ENCODE measurements at regions of chr7 and their contacts with region 1.

Region 1: GRCh38 chr7:151315038-151315655 is 26.5 kb upstream of the NUB1 start:
- DNase-seq: peak; percentile 31
- ATAC-seq: peak; percentile 96
- H3K4me3 ChIP-seq: no peak overlapping the region
- H3K27ac ChIP-seq: no peak overlapping the region
- H3K4me1 ChIP-seq: no peaks in the 10 kb centered on the region
- H3K27me3 ChIP-seq: no peaks in the 10 kb centered on the region
- CTCF ChIP-seq: peak; percentile 73 to 87 (median 74)
- EP300 ChIP-seq: no peak
- POLR2A ChIP-seq: no peak
- RAD21 ChIP-seq: peak; percentile 93

Region 2: GRCh38 chr7:151244196-151244840 is 70.8 kb before region 1 on chr7:
- CTCF ChIA-PET with region 1: interaction called, 14 read pairs
- POLR2A ChIA-PET with region 1: no interaction called
- RAD21 ChIA-PET with region 1: interaction called, 4 read pairs
- SMC1A ChIA-PET with region 1: interaction called, 5 read pairs
- in situ Hi-C with region 1: no loop called
- intact Hi-C with region 1: no loop called
- DNase-seq: peak; percentile 15
- ATAC-seq: peak; percentile 69
- H3K4me3 ChIP-seq: no peak overlapping the region; the same call in 1 of the 2 replicates
- H3K27ac ChIP-seq: no peak overlapping the region
- H3K4me1 ChIP-seq: peaks cover 16% of the 10 kb centered on the region
- H3K27me3 ChIP-seq: peaks cover 15 to 24% of the 10 kb centered on the region in 2 experiments
- CTCF ChIP-seq: peak; percentile 65 to 92 (median 90)
- EP300 ChIP-seq: no peak
- POLR2A ChIP-seq: no peak
- RAD21 ChIP-seq: peak; percentile 68

Region 3: GRCh38 chr7:151327659-151328058 is 12.5 kb after region 1 on chr7:
- CTCF ChIA-PET with region 1: interaction called, 34 read pairs
- POLR2A ChIA-PET with region 1: interaction called, 5 read pairs
- RAD21 ChIA-PET with region 1: interaction called, 3 read pairs
- SMC1A ChIA-PET with region 1: interaction called, 18 read pairs
- in situ Hi-C with region 1: no loop called
- intact Hi-C with region 1: no loop called
- DNase-seq: no peak
- ATAC-seq: no peak
- H3K4me3 ChIP-seq: no peak overlapping the region
- H3K27ac ChIP-seq: no peak overlapping the region
- H3K4me1 ChIP-seq: no peaks in the 10 kb centered on the region
- H3K27me3 ChIP-seq: no peaks in the 10 kb centered on the region
- CTCF ChIP-seq: no peak
- EP300 ChIP-seq: no peak
- POLR2A ChIP-seq: no peak
- RAD21 ChIP-seq: no peak

Region 4: DNA sequence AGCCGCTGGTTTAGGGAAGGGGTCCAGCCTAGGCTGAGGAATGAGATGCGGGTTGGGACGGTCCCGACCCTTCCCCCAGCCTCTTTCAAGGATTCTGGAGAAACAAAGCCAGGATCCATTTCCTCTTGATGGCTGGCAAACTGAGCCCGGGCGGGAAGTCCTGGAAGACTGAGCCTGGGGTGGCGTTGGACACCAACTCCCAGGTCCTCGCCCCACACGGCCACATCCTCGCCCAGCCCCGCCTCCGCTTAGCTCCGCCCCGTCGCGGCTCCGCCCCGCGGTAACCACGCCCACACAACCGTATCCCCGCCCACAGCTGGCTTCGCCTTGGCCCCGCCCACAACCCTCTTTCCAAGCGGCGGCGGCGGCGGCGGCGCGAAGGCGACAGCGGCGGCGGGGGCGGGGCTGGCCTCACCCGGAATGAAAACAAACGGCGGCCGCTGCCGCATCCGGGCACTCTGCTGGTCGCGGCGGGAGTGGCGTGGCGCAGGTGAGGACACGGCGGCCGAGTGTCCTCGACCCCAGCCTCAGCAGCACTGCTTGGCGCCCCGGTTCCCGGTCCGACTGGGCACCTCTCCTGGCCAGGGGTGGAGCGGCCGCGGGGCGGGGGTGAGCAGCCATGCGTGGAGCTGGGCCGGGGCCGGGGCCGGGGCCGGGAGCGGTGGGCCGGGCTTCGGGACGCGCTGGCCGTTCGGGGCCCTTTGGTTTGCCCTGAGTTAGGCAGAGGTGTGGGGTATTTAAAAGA is 26.4 kb after region 1 on chr7 and contains the start of gene NUB1:
- CTCF ChIA-PET with region 1: interaction called, 69 read pairs
- POLR2A ChIA-PET with region 1: interaction called, 8 read pairs
- RAD21 ChIA-PET with region 1: interaction called, 10 read pairs
- SMC1A ChIA-PET with region 1: interaction called, 27 read pairs
- in situ Hi-C with region 1: no loop called
- intact Hi-C with region 1: no loop called
- DNase-seq: no peak
- ATAC-seq: peak; percentile 80
- H3K4me3 ChIP-seq: peak within 1 kb of the TSS; percentile 65
- H3K27ac ChIP-seq: peak within 1 kb of the TSS; percentile 81
- H3K4me1 ChIP-seq: peaks cover 25% of the 10 kb centered on the region
- H3K27me3 ChIP-seq: no peaks in the 10 kb centered on the region
- CTCF ChIP-seq: no peak
- EP300 ChIP-seq: no peak
- POLR2A ChIP-seq: peak; percentile 95
- RAD21 ChIP-seq: no peak
- polyA plus RNA-seq, gene NUB1: 24.1 to 28.8 TPM

Region 5: GRCh38 chr7:151361193-151361959 is 46.2 kb after region 1 on chr7:
- CTCF ChIA-PET with region 1: interaction called, 252 read pairs
- POLR2A ChIA-PET with region 1: no interaction called
- RAD21 ChIA-PET with region 1: no interaction called
- SMC1A ChIA-PET with region 1: no interaction called
- in situ Hi-C with region 1: no loop called
- intact Hi-C with region 1: no loop called
- DNase-seq: no peak
- ATAC-seq: no peak
- H3K4me3 ChIP-seq: no peak overlapping the region
- H3K27ac ChIP-seq: no peak overlapping the region
- H3K4me1 ChIP-seq: no peaks in the 10 kb centered on the region
- H3K27me3 ChIP-seq: no peaks in the 10 kb centered on the region
- CTCF ChIP-seq: no peak
- EP300 ChIP-seq: no peak
- POLR2A ChIP-seq: no peak
- RAD21 ChIP-seq: no peak

Region 6: DNA sequence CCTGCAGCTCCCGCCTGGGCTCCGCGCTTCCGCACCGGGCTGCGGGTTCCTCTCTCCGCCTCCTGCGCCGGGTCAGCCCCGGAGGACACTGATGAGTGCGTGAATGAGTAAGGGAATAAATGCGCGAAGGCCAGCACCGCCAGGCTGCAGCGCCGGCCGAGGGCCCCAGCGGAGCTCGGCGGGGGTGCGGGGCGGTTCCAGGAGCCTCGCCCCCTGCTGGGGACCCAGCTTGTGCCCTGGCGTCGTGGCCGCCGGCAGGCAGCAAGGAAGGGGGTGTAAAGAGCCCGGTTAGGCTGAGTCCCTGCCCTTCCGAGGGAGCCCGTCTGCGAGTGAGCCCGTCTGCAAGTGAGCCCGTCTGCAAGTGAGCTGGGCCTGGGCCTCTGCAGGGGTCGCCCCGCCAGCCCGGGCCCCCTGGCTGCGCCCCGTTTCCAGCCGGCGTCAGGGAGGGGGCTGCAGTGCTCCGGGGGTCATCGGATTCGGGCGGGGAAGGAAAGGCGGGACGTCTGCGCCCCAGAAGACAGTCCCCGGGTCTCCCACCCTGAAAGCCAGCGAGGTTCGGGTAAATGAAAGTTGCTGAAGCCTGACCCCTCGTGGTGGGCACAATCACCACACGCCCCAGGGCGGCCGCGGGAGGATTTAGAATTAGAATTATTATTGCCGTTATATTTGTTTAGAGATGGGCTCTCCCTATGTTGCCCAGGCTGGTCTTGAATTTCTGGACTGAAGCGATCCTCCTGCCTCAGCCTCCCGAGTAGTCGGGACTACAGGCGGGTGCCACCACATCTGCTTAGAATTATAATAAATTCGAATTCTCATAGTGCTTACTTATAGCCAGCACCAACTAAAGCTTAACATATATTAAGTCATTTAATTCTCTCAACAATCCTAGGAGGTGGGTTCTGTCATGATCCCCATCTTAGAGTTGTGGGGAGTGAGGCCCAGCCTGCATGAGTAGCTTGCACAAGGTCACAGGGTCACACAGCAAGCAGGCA is 133.4 kb after region 1 on chr7:
- CTCF ChIA-PET with region 1: interaction called, 23 read pairs
- POLR2A ChIA-PET with region 1: no interaction called
- RAD21 ChIA-PET with region 1: interaction called, 10 read pairs
- SMC1A ChIA-PET with region 1: interaction called, 13 read pairs
- in situ Hi-C with region 1: no loop called
- intact Hi-C with region 1: loop called (anchors 1 kb)
- DNase-seq: no peak
- ATAC-seq: peak; percentile 94
- H3K4me3 ChIP-seq: peak overlapping the region; percentile 56; the same call in 1 of the 2 replicates
- H3K27ac ChIP-seq: no peak overlapping the region
- H3K4me1 ChIP-seq: no peaks in the 10 kb centered on the region; the same call in 1 of the 2 replicates
- H3K27me3 ChIP-seq: no peaks in the 10 kb centered on the region; a peak in 1 of 4 replicates
- CTCF ChIP-seq: peak; percentile 68 to 76 (median 70); a peak in 5 of 6 replicates
- EP300 ChIP-seq: no peak
- POLR2A ChIP-seq: no peak
- RAD21 ChIP-seq: peak; percentile 72

Region 7: DNA sequence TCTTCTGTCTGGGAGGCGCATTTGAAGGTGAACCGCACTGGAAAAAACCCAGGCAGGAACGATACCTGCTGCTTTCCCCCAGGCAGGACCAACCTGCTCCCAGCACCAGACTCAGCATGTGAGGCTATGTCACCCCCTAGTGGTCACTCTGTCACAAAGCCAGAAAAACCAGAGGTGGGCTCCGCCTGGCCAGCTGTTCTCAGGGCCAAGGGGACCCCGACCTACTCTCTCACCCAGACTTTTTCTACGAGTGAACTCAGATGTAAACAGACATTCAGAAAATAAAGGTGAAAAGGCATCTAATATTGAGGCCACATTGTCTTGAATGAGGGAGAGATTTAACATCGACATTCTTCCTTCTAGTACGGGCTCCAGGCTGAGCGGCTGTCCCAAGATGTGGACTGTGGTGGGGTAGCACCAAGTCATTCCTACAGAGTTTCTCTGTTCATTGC is 444.5 kb after region 1 on chr7:
- CTCF ChIA-PET with region 1: interaction called, 7 read pairs
- POLR2A ChIA-PET with region 1: no interaction called
- RAD21 ChIA-PET with region 1: no interaction called
- SMC1A ChIA-PET with region 1: interaction called, 3 read pairs
- in situ Hi-C with region 1: no loop called
- intact Hi-C with region 1: loop called (anchors 5 kb)
- DNase-seq: no peak
- ATAC-seq: peak; percentile 91
- H3K4me3 ChIP-seq: no peak overlapping the region; the same call in 1 of the 2 replicates
- H3K27ac ChIP-seq: no peak overlapping the region
- H3K4me1 ChIP-seq: no peaks in the 10 kb centered on the region
- H3K27me3 ChIP-seq: no peaks in the 10 kb centered on the region; a peak in 1 of 4 replicates
- CTCF ChIP-seq: peak; percentile 87 to 89 (median 88)
- EP300 ChIP-seq: no peak
- POLR2A ChIP-seq: no peak
- RAD21 ChIP-seq: peak; percentile 94